ENCODE measurements at regions of chr11 and their contacts with region 1.

Region 1: DNA sequence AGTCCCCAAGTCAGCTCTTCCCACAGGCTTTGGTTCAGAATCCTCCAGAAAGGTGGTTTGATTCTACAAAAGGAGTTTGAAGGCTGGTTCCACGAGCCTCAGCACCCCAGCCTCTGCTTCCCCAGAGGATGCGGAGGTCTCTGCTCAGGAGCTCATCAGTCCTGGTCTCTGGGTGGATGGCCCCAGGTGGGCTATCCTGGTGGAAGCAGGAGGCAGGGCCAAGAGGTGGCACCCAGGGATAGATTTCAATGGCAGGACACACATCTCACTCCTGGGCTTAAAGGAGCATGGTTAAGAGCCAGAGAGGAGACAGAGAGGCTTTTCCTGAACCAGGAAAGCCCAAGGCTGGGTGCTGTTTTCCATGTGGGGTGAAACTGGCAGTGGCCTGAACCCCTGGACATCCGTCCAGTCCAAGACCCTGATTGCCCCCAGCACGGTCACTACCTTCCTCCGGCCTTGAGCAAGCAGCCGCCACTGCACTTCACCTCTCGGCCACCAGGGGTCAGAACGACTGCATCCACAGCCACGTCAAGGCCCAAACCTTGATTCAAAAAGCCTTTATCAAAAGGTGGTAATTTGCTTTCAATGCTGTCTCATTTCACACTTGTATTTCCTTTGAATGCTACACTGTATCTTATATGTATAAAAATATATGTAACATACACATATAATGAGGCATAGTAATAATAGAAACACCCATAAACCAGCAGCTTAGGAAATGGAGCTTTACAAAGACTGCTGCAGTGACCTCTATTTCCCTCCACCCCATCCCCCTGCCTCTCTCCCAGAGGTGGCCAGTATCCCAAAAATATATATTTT is 19.3 kb upstream of the FXYD2 start:
- DNase-seq: peak; percentile 66
- H3K4me3 Mint-ChIP-seq: no peak overlapping the region
- H3K27ac Mint-ChIP-seq: no peak overlapping the region
- H3K4me1 Mint-ChIP-seq: no peaks in the 10 kb centered on the region
- H3K27me3 Mint-ChIP-seq: peaks cover 7% of the 10 kb centered on the region

Region 2: DNA sequence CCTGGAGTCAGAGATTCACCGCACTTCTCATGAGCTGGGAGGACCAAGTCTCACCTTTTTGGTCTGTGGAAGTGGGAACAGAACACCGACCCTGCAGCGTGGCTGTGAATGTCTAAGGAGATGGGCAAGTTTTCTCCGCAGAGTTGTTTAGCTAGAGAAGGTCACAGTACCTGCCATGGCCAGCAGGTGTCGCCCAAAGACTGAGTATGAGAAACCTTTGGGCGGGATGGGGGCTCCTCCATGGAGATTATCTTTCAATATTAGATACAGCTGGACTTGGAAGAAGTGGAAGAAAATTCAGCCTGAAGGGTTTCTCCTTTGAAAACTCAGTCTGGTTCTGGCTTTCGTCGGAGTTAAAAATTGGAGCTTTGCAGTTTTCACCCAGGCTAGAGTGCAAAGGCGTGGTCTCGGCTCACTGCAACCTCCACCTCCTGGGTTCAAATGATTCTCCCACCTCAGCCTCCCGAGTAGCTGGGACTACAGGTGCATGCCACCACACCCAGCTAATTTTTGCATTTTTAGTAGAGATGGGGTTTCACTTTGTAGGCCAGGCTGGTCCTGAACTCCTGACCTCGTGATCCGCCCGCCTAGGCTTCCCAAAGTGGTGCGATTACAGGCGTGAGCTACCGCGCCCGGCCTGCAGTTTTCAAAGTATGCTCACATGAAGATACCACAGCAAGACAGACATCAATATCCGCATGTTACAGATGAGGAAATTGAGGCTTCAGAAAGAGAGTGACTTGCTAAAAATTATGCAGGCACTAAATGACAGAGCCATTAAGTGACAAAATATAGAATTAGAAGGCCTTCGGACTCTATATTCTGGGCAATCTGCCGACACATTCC is 36.2 kb before region 1 on chr11:
- intact Hi-C with region 1: loop called (anchors 5 kb)
- DNase-seq: peak; percentile 54
- H3K4me3 Mint-ChIP-seq: no peak overlapping the region
- H3K27ac Mint-ChIP-seq: no peak overlapping the region
- H3K4me1 Mint-ChIP-seq: peaks cover 8% of the 10 kb centered on the region
- H3K27me3 Mint-ChIP-seq: peaks cover 10% of the 10 kb centered on the region

Region 3: GRCh38 chr11:117900121-117900648 is 56.3 kb after region 1 on chr11:
- intact Hi-C with region 1: loop called (anchors 5 kb)
- DNase-seq: no peak
- H3K4me3 Mint-ChIP-seq: no peak overlapping the region
- H3K27ac Mint-ChIP-seq: no peak overlapping the region
- H3K4me1 Mint-ChIP-seq: peaks cover 5% of the 10 kb centered on the region
- H3K27me3 Mint-ChIP-seq: peaks cover 5% of the 10 kb centered on the region

Region 4: DNA sequence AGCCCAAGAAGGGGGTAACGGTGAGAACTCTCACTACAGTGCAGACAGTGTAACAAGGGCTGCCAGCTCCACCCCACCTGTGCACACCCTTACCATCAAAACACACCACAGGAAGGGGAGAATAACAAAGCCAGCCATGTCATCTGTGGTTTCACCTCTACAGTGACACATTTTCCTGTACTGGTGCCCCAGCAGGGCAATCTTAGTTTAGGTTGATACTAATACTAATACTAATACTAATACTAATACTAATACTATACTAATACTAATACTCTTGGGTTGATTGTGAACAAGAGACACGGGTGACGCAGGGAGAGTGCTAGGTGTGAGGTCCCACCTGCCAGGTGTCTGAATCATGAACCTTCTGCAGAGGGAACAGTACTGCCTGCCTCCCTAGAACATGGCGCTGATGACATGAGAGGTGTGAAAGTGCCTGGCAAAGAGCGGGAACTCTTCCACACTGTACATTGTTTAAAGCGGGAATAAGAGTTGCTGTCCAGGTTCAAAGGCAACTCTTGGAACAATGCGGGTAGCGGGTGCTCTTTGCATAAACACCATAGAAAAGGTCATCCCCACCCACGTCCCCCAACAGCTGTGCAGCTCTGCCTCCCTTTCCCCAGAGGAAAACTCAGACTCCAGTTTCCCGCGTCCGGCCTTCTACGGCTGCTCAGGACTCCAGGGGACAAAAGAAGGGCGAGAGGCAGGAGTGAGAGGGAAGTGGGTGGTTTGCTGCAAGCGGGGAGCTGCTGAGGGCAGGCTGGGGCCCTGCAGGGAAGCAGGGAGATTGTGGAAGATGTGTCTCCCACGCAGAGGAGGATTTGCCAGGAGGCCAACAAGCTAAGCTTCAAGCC is 208.0 kb after region 1 on chr11:
- intact Hi-C with region 1: loop called (anchors 1 kb)
- DNase-seq: peak; percentile 65
- H3K4me3 Mint-ChIP-seq: peak overlapping the region; percentile 5
- H3K27ac Mint-ChIP-seq: peak overlapping the region; percentile 94
- H3K4me1 Mint-ChIP-seq: peaks cover 54% of the 10 kb centered on the region
- H3K27me3 Mint-ChIP-seq: no peaks in the 10 kb centered on the region